Caco-2 (cell line): ENCODE measurements at regions of chr2 and their contacts with region 1.

Region 1: DNA sequence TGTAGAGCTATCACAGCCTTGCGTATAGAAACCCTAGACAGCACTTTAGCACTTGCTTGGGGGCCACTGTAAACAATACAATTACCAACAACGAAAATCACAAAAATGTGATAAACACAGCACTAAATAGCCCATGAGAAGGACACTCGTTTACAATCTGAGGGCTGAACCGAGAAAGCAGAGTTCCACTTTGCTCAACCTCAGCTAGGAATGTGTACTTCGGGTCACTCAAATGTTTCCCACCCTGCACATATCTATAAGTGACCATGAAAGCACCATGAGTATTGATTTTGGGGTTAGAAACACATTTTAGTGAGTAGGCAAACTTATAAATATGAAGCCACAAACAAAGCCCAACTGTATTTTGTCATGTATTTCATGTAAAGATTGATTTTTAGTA is 62.3 kb downstream of the FRZB start:
- DNase-seq: no peak
- H3K4me3 ChIP-seq: no peak overlapping the region
- H3K4me3 Mint-ChIP-seq: no peak overlapping the region
- H3K27ac Mint-ChIP-seq: no peak overlapping the region
- H3K4me1 ChIP-seq: no peaks in the 10 kb centered on the region
- H3K4me1 Mint-ChIP-seq: no peaks in the 10 kb centered on the region
- H3K27me3 ChIP-seq: no peaks in the 10 kb centered on the region
- H3K27me3 Mint-ChIP-seq: no peaks in the 10 kb centered on the region
- CTCF ChIP-seq: no peak

Region 2: GRCh38 chr2:182897137-182897536 is 93.0 kb after region 1 on chr2:
- CTCF ChIA-PET with region 1: no interaction called
- POLR2A ChIA-PET with region 1: no interaction called
- intact Hi-C with region 1: no loop called
- DNase-seq: no peak
- H3K4me3 ChIP-seq: no peak overlapping the region
- H3K4me3 Mint-ChIP-seq: no peak overlapping the region
- H3K27ac Mint-ChIP-seq: no peak overlapping the region
- H3K4me1 ChIP-seq: peaks cover 15% of the 10 kb centered on the region
- H3K4me1 Mint-ChIP-seq: peaks cover 7% of the 10 kb centered on the region
- H3K27me3 ChIP-seq: no peaks in the 10 kb centered on the region
- H3K27me3 Mint-ChIP-seq: no peaks in the 10 kb centered on the region
- CTCF ChIP-seq: no peak

Region 3: GRCh38 chr2:183105402-183106134 is 301.4 kb after region 1 on chr2:
- CTCF ChIA-PET with region 1: no interaction called
- POLR2A ChIA-PET with region 1: interaction called, 10 read pairs
- intact Hi-C with region 1: no loop called
- DNase-seq: no peak
- H3K4me3 ChIP-seq: no peak overlapping the region
- H3K4me3 Mint-ChIP-seq: no peak overlapping the region
- H3K27ac Mint-ChIP-seq: no peak overlapping the region
- H3K4me1 ChIP-seq: no peaks in the 10 kb centered on the region
- H3K4me1 Mint-ChIP-seq: no peaks in the 10 kb centered on the region
- H3K27me3 ChIP-seq: no peaks in the 10 kb centered on the region
- H3K27me3 Mint-ChIP-seq: no peaks in the 10 kb centered on the region
- CTCF ChIP-seq: no peak

Region 4: GRCh38 chr2:183383854-183384253 is 579.7 kb after region 1 on chr2:
- CTCF ChIA-PET with region 1: no interaction called
- POLR2A ChIA-PET with region 1: no interaction called
- intact Hi-C with region 1: no loop called
- DNase-seq: no peak
- H3K4me3 ChIP-seq: no peak overlapping the region
- H3K4me3 Mint-ChIP-seq: no peak overlapping the region
- H3K27ac Mint-ChIP-seq: no peak overlapping the region
- H3K4me1 ChIP-seq: no peaks in the 10 kb centered on the region
- H3K4me1 Mint-ChIP-seq: no peaks in the 10 kb centered on the region
- H3K27me3 ChIP-seq: no peaks in the 10 kb centered on the region
- H3K27me3 Mint-ChIP-seq: no peaks in the 10 kb centered on the region
- CTCF ChIP-seq: no peak